Activated CD4-positive, alpha-beta memory T cell treated with anti-CD3 and anti-CD28 coated beads for 36 hours (primary cell): ENCODE measurements at regions of chr4 and their contacts with region 1.

Region 1: GRCh38 chr4:38132107-38132673 is 172.0 kb downstream of the PTTG2 start:
- DNase-seq: peak; percentile 85
- H3K4me3 Mint-ChIP-seq: peak overlapping the region; percentile 56
- H3K27ac Mint-ChIP-seq: peak overlapping the region; percentile 96
- H3K4me1 Mint-ChIP-seq: peaks cover 76% of the 10 kb centered on the region
- H3K27me3 Mint-ChIP-seq: peaks cover 1% of the 10 kb centered on the region

Region 2: GRCh38 chr4:37977471-37978247 is 154.5 kb before region 1 on chr4:
- CTCF ChIA-PET with region 1: no interaction called
- POLR2A ChIA-PET with region 1: interaction called, 3 read pairs
- intact Hi-C with region 1: loop called (anchors 2 kb)
- DNase-seq: peak; percentile 82
- H3K4me3 Mint-ChIP-seq: peak overlapping the region; percentile 75
- H3K27ac Mint-ChIP-seq: peak overlapping the region; percentile 63
- H3K4me1 Mint-ChIP-seq: peaks cover 36% of the 10 kb centered on the region
- H3K27me3 Mint-ChIP-seq: no peaks in the 10 kb centered on the region

Region 3: DNA sequence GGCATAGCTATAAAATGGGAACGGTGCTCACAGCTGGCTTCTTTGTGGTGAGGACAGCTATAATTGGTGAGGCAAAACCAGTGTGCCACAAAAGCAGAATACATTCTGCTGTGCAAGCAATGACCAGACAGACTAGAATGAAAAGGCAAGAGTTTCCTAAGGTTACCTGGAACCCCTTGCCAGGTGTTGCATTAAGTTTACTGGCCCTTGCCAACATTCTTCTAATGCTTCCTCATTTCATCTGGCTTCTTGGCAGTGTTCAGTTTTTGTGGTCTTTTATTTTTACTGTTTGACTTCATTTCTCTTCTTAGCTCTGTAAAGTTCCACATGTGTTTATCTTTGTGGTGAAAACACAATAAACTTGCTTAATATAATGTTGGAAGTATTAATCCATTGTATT is 40.6 kb before region 1 on chr4:
- CTCF ChIA-PET with region 1: interaction called, 14 read pairs
- POLR2A ChIA-PET with region 1: interaction called, 52 read pairs
- intact Hi-C with region 1: loop called (anchors 1 kb)
- DNase-seq: no peak
- H3K4me3 Mint-ChIP-seq: peak overlapping the region; percentile 50
- H3K27ac Mint-ChIP-seq: peak overlapping the region; percentile 88
- H3K4me1 Mint-ChIP-seq: peaks cover 42% of the 10 kb centered on the region
- H3K27me3 Mint-ChIP-seq: no peaks in the 10 kb centered on the region

Region 4: DNA sequence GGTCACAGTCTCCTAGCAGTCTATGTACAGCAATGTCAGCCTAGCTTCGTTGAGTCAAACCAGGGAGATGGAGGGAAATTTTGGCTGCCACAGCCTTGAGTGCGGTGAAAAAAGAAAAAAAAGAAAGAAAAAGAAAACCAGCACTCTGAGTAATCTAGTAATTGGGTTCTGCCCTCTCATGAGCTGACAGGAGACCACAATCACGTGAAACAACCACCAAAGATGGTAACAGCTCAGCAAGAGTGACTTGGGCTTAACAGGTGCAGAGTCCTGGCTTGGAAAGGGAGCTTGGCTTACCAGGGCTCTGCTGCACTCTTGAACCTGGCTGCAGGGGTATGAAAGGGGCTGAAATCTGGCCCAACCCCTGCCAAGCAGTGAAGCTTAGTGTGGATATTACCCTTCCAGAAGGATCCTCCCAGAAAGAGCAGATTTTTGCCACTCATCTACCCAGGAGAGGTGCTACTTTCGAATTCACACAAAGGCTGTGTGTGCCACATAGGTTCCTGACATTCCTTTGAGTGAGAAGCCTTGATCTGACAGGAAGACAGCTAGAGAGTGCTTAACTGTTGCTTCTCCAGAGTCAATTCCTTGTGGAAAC is 178.4 kb after region 1 on chr4:
- CTCF ChIA-PET with region 1: interaction called, 4 read pairs
- POLR2A ChIA-PET with region 1: interaction called, 26 read pairs
- intact Hi-C with region 1: loop called (anchors 1 kb)
- DNase-seq: peak; percentile 86
- H3K4me3 Mint-ChIP-seq: peak overlapping the region; percentile 12
- H3K27ac Mint-ChIP-seq: peak overlapping the region; percentile 72
- H3K4me1 Mint-ChIP-seq: peaks cover 68% of the 10 kb centered on the region
- H3K27me3 Mint-ChIP-seq: peaks cover 15% of the 10 kb centered on the region

Region 5: GRCh38 chr4:38343608-38344007 is 211.4 kb after region 1 on chr4:
- CTCF ChIA-PET with region 1: no interaction called
- POLR2A ChIA-PET with region 1: no interaction called
- intact Hi-C with region 1: no loop called
- DNase-seq: no peak
- H3K4me3 Mint-ChIP-seq: no peak overlapping the region
- H3K27ac Mint-ChIP-seq: no peak overlapping the region
- H3K4me1 Mint-ChIP-seq: no peaks in the 10 kb centered on the region
- H3K27me3 Mint-ChIP-seq: peaks cover 15% of the 10 kb centered on the region

Region 6: GRCh38 chr4:38730830-38731646 is 598.8 kb after region 1 on chr4:
- CTCF ChIA-PET with region 1: no interaction called
- POLR2A ChIA-PET with region 1: no interaction called
- intact Hi-C with region 1: loop called (anchors 1 kb)
- DNase-seq: peak; percentile 90
- H3K4me3 Mint-ChIP-seq: no peak overlapping the region
- H3K27ac Mint-ChIP-seq: no peak overlapping the region
- H3K4me1 Mint-ChIP-seq: peaks cover 14% of the 10 kb centered on the region
- H3K27me3 Mint-ChIP-seq: no peaks in the 10 kb centered on the region